Lower lobe of right lung (tissue), 2 donors: ENCODE measurements at regions of chr20 and their contacts with region 1.

Region 1: GRCh38 chr20:44609511-44610312 is 27.3 kb downstream of the PKIG start:
- DNase-seq: peak; percentile 91
- ATAC-seq: peak; percentile 98
- H3K4me3 ChIP-seq: peak overlapping the region; percentile 31
- H3K27ac ChIP-seq: peak overlapping the region; percentile 77
- H3K4me1 ChIP-seq: peaks cover 22% of the 10 kb centered on the region
- H3K27me3 ChIP-seq: no peaks in the 10 kb centered on the region
- CTCF ChIP-seq: peak; percentile 98

Region 2: GRCh38 chr20:44388466-44389023 is 221.2 kb before region 1 on chr20:
- intact Hi-C with region 1: loop called (anchors 10 kb)
- DNase-seq: peak; percentile 77
- ATAC-seq: peak; percentile 79 to 81
- H3K4me3 ChIP-seq: no peak overlapping the region
- H3K27ac ChIP-seq: no peak overlapping the region
- H3K4me1 ChIP-seq: peaks cover 9% of the 10 kb centered on the region
- H3K27me3 ChIP-seq: peaks cover 13% of the 10 kb centered on the region
- CTCF ChIP-seq: peak; percentile 73

Region 3: DNA sequence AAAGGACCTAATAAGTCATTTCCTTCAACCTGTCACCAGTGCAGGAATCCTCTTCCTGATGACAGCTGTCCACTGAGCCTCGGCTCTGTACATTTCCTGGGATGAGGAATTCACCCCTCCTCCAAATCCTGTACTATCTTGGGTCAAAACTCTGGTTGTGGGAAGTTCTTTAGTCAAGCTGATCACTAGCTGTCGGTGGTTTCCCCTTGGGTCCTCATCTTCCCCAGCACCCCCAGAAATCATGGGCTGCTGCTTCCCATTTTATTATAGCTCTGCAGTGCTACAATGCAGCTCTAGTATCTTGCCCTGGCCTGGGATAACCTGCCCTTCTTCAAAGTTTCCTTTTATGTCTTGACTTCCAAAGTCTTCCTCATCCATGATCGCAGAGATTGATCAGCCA is 56.4 kb after region 1 on chr20:
- intact Hi-C with region 1: no loop called
- DNase-seq: no peak
- ATAC-seq: no peak
- H3K4me3 ChIP-seq: no peak overlapping the region
- H3K27ac ChIP-seq: no peak overlapping the region
- H3K4me1 ChIP-seq: no peaks in the 10 kb centered on the region
- H3K27me3 ChIP-seq: no peaks in the 10 kb centered on the region
- CTCF ChIP-seq: no peak

Region 4: DNA sequence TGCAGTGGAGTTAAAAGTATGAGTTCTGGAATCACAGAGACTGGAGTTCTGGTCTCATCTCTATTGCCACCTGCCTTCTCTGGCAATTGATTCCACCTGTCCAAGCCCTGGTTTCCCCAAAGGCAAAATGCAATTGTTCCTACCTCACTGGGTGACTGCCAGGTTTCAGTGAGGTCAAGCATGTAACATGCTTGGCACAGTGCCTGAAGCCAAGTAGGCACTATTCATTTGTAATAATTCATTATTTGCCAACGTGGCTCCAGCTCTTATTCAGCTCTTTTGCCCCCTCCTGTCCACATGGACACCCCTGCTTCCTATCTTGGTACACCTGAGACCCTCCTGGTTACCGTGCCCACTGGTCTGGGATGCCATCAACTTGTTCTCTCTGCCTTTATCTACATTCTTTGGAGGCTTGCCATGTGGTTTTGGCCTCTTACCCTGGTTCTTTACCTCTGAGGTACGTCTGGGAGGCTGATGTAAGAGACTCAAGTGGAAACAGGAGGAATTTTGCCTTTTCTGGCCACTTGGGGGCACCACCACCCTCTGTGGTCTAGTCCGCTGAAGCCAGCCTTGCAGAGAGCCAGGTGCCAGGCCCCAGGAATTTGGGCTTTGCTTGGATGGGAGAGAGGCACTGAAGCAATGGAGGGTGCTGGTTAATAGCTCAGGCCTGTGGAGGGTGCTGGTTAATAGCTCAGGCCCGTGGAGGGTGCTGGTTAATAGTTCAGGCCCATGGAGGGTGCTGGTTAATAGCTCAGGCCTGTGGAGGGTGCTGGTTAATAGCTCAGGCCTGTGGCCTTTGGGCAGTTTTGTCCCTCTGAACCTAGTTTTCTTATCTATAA is 137.7 kb after region 1 on chr20:
- intact Hi-C with region 1: no loop called
- DNase-seq: peak; percentile 84
- ATAC-seq: peak; percentile 86 to 88
- H3K4me3 ChIP-seq: peak overlapping the region; percentile 55
- H3K27ac ChIP-seq: peak overlapping the region; percentile 42
- H3K4me1 ChIP-seq: peaks cover 35% of the 10 kb centered on the region
- H3K27me3 ChIP-seq: peaks cover 39% of the 10 kb centered on the region
- CTCF ChIP-seq: peak; percentile 69

Region 5: DNA sequence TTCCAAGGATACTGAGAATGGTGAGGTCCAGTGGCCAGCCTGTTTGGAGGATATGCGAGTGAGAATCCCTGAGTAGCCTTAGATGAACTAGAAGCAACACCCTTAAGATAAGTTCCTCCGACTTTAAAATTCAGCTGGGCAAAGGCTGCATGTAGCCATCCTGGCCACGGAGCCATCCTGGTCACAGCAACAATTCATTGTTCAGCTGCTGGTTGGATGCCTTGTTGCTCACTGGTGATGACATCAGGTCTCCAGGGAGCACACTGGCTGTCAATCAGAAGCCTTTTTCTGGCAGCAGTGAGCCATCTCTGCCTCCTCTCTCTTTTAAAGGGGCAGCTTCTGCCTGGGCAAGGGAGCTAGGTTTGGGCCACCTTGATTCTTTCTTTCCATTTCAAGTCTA is 223.0 kb after region 1 on chr20:
- intact Hi-C with region 1: no loop called
- DNase-seq: no peak
- ATAC-seq: no peak
- H3K4me3 ChIP-seq: no peak overlapping the region
- H3K27ac ChIP-seq: no peak overlapping the region
- H3K4me1 ChIP-seq: no peaks in the 10 kb centered on the region
- H3K27me3 ChIP-seq: no peaks in the 10 kb centered on the region
- CTCF ChIP-seq: no peak

Region 6: GRCh38 chr20:44966030-44966961 is 356.6 kb after region 1 on chr20 and contains the start of gene STK4:
- intact Hi-C with region 1: no loop called
- DNase-seq: peak; percentile 97
- ATAC-seq: peak; percentile 98 to 99
- H3K4me3 ChIP-seq: peak within 1 kb of the TSS; percentile 93
- H3K27ac ChIP-seq: peak within 1 kb of the TSS; percentile 93
- H3K4me1 ChIP-seq: peaks cover 35% of the 10 kb centered on the region
- H3K27me3 ChIP-seq: no peaks in the 10 kb centered on the region
- CTCF ChIP-seq: peak; percentile 62
- total RNA-seq, gene STK4: 73.4 TPM